ENCODE measurements at regions of chr5 and their contacts with region 1.

Region 1: DNA sequence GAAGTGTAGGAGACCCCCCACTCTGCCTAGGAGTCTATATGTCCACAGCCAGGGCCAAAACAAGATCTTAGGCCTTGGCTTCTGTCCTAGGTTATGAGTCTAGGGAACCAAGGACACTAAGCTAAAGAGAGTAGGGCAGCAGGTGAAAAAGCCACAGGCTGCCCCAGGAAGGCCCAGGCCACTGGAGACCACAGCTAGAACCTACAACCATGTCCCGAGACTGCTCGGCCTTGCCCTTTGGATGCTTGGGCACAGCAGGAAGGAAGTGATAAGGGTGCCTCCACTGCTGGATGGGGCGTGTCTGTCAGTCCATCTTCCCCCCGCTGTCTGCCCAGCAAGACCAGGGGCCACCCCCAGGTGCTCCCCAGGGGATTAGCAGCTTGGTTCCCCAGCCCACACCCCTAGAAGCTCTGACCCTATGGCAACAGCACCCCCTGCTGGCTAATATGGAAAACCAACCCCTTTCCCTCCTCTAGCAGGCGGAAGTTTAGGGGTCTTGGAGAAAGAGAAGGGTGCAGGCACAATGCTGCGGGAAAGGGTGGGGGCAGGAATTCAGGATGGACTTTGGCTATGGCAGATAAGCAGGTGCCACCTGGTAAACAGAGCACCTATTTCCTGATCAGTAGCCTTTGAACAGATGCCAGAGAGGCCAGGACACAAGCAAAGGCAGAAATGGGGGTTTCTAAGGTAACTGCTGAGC is 10.5 kb upstream of the IRF1 start:
- DNase-seq: peak; percentile 91
- H3K4me3 Mint-ChIP-seq: no peak overlapping the region
- H3K27ac Mint-ChIP-seq: peak overlapping the region; percentile 83
- H3K4me1 Mint-ChIP-seq: peaks cover 35% of the 10 kb centered on the region
- H3K27me3 Mint-ChIP-seq: no peaks in the 10 kb centered on the region
- CTCF ChIP-seq: peak; percentile 99

Region 2: GRCh38 chr5:131952301-131952857 is 548.7 kb before region 1 on chr5:
- CTCF ChIA-PET with region 1: no interaction called
- POLR2A ChIA-PET with region 1: no interaction called
- intact Hi-C with region 1: no loop called
- DNase-seq: peak; percentile 7
- H3K4me3 Mint-ChIP-seq: no peak overlapping the region
- H3K27ac Mint-ChIP-seq: no peak overlapping the region
- H3K4me1 Mint-ChIP-seq: no peaks in the 10 kb centered on the region
- H3K27me3 Mint-ChIP-seq: peaks cover 45% of the 10 kb centered on the region
- CTCF ChIP-seq: no peak

Region 3: GRCh38 chr5:132369474-132370180 is 131.5 kb before region 1 on chr5 and contains the start of gene SLC22A5:
- CTCF ChIA-PET with region 1: interaction called, 33 read pairs
- POLR2A ChIA-PET with region 1: interaction called, 72 read pairs
- intact Hi-C with region 1: no loop called
- DNase-seq: peak; percentile 84
- H3K4me3 Mint-ChIP-seq: peak within 1 kb of the TSS; percentile 79
- H3K27ac Mint-ChIP-seq: peak within 1 kb of the TSS; percentile 39
- H3K4me1 Mint-ChIP-seq: peaks cover 44% of the 10 kb centered on the region
- H3K27me3 Mint-ChIP-seq: no peaks in the 10 kb centered on the region
- CTCF ChIP-seq: no peak
- total RNA-seq, gene SLC22A5: 122 and 167 TPM in 2 replicates

Region 4: GRCh38 chr5:132419502-132420468 is 81.3 kb before region 1 on chr5:
- CTCF ChIA-PET with region 1: interaction called, 89 read pairs
- POLR2A ChIA-PET with region 1: interaction called, 52 read pairs
- intact Hi-C with region 1: loop called (anchors 1 kb)
- DNase-seq: peak; percentile 87
- H3K4me3 Mint-ChIP-seq: no peak overlapping the region
- H3K27ac Mint-ChIP-seq: peak overlapping the region; percentile 17
- H3K4me1 Mint-ChIP-seq: peaks cover 35% of the 10 kb centered on the region
- H3K27me3 Mint-ChIP-seq: no peaks in the 10 kb centered on the region
- CTCF ChIP-seq: peak; percentile 97

Region 5: DNA sequence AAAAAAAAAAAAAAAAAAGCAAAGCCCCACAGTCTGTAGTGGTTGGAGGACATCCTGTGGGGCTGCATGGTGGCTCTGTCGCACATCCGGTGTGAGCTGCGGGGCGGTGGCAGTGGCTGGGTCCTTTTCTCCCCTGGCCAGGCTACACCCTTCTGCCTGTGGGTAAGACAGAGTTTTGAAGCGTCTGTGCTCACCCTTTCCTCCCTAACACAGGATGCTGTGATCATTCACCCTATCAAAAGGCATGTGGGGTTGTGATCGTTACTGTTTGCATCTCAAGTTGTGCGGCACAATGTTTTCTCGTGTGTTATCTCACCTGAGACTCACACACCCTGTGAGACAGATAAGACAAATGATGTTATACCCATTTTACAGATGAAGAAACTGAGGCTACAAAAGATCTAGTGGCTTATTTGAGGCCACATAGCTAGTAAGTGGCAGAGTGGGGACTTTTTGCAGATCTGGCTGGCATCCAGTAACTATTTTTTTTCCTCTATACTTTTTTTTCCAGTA is 28.0 kb before region 1 on chr5:
- CTCF ChIA-PET with region 1: interaction called, 14 read pairs
- POLR2A ChIA-PET with region 1: interaction called, 21 read pairs
- intact Hi-C with region 1: no loop called
- DNase-seq: no peak
- H3K4me3 Mint-ChIP-seq: no peak overlapping the region
- H3K27ac Mint-ChIP-seq: no peak overlapping the region
- H3K4me1 Mint-ChIP-seq: peaks cover 7% of the 10 kb centered on the region
- H3K27me3 Mint-ChIP-seq: no peaks in the 10 kb centered on the region
- CTCF ChIP-seq: no peak